ENCODE measurements at regions of chr1 and their contacts with region 1.

Region 1: DNA sequence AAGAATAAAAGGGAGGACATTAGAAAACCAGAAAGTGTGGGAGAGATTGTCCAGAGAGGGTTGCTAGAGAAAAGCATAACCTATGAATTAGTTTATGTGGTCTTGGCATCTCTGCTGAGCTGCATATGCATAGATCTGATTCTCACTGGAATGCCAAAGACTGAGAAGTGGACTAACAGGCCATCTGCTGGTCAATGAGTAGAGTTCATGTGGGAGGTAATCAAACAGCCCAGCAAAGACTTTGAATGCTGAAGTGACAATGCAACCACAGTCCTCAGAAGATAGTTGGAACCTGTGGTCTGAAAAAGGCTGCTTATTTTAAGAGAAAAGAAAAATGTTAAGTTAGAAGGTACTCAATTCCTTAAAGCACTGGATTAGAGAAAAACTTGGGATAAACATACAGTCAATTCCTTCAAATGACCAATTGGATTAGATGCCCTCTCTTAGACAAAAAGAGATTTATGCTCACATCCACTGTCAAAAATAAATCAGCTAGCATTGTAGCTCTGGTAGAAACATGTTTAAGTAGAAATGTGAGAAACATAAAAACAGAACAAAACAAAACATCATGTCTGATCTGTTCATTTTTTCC is 382.8 kb downstream of the AMY1C start:
- DNase-seq: no peak
- H3K4me3 ChIP-seq: no peak overlapping the region
- H3K27ac ChIP-seq: no peak overlapping the region
- H3K4me1 ChIP-seq: no peaks in the 10 kb centered on the region
- H3K27me3 ChIP-seq: no peaks in the 10 kb centered on the region
- CTCF ChIP-seq: peak; percentile 38

Region 2: GRCh38 chr1:103275725-103276124 is 856.8 kb before region 1 on chr1:
- intact Hi-C with region 1: no loop called
- DNase-seq: no peak
- H3K4me3 ChIP-seq: no peak overlapping the region
- H3K27ac ChIP-seq: no peak overlapping the region
- H3K4me1 ChIP-seq: no peaks in the 10 kb centered on the region
- H3K27me3 ChIP-seq: no peaks in the 10 kb centered on the region
- CTCF ChIP-seq: no peak

Region 3: GRCh38 chr1:103948526-103948925 is 184.0 kb before region 1 on chr1:
- intact Hi-C with region 1: loop called (anchors 10 kb)
- DNase-seq: no peak
- H3K4me3 ChIP-seq: no peak overlapping the region
- H3K27ac ChIP-seq: no peak overlapping the region
- H3K4me1 ChIP-seq: no peaks in the 10 kb centered on the region
- H3K27me3 ChIP-seq: no peaks in the 10 kb centered on the region
- CTCF ChIP-seq: no peak

Measured in colonic mucosa (tissue), 4 donors.